ENCODE measurements at regions of chr6 and their contacts with region 1.

Region 1: DNA sequence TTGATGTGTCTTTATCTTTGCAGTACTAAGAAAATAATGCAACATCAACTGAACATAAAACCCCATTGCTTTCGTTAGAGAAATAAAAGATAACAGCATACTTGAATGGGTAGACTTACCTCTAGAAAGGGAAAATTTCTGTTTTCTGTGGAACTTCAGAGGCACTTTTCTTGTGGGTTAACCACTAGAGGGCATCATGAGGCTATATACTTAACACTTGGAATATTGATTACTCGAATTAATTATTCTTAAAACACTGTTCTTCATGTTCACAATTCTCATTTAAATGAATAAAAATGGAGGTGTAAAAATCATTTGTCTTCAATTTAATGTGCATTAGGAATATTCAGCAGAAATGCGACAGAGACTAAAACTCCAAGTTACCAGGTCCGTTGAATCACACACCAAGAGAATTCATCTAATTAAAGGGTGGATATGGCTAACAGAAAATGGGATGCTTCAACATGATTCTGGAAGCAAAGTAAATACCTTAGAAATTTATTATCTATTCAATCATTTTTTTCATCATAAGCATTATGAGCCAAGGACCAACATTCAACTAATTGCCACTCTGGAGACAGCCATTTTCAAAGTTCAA is 330.8 kb upstream of the PREP start:
- DNase-seq: no peak
- ATAC-seq: no peak
- H3K4me3 Mint-ChIP-seq: no peak overlapping the region
- H3K27ac Mint-ChIP-seq: no peak overlapping the region
- H3K4me1 Mint-ChIP-seq: peaks cover 2% of the 10 kb centered on the region
- H3K27me3 Mint-ChIP-seq: peaks cover 2% of the 10 kb centered on the region
- CTCF ChIP-seq: peak; percentile 81

Region 2: DNA sequence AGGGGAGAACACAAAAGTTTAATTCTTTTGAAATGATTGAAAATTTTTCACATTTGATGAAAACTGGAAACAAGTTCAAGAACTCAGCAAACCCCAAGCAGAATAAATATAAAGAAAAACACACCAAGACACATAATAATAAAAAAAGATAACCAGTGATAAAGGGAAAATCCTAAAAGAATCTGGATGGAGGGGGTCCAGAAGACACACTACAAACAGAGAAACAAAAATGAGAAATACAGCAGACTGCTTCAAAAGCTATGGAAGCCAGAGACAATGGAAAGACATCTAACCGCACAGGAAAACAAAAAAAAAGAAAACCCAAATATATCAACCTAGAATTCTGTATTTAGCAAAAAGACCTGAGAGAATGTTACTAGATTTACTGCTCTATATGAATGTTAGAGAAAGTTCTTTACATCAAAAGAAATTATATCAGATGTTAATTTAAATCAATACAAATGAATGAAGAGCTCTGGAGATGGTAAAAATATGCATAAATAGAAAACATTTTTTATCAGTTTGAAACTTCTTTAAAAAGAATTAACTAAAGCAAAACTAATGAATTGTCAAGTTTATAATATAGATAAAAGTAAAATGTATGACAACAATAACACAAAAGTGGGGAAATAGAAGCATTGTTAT is 20.1 kb before region 1 on chr6:
- CTCF ChIA-PET with region 1: no interaction called
- POLR2A ChIA-PET with region 1: no interaction called
- intact Hi-C with region 1: no loop called
- DNase-seq: no peak
- ATAC-seq: no peak
- H3K4me3 Mint-ChIP-seq: no peak overlapping the region
- H3K27ac Mint-ChIP-seq: no peak overlapping the region
- H3K4me1 Mint-ChIP-seq: no peaks in the 10 kb centered on the region
- H3K27me3 Mint-ChIP-seq: peaks cover 3% of the 10 kb centered on the region
- CTCF ChIP-seq: no peak

Region 3: DNA sequence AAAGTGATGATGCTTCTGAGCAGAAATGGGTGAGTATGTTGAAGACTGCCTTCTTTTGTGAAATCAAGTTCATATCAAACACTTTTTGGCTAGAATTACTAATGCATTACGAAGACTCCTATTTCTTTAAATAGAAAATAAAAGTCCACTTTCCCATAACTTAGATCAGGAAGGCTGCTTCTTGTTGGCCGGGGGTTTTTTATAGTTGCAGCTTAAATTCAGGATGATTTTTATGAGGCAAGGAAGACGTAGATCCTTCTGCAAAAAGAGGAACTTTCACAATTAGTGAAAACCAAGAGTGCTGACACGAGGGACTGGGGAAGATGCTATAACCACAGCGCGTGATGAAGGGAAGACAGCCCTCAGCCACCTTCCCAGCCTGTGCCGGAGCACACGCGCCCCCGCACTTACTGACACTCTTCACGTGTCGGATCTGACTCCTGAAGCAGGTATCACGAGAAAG is 146.4 kb after region 1 on chr6:
- CTCF ChIA-PET with region 1: no interaction called
- POLR2A ChIA-PET with region 1: no interaction called
- intact Hi-C with region 1: loop called (anchors 10 kb)
- DNase-seq: peak; percentile 51
- ATAC-seq: peak; percentile 71
- H3K4me3 Mint-ChIP-seq: peak overlapping the region; percentile 26
- H3K27ac Mint-ChIP-seq: no peak overlapping the region
- H3K4me1 Mint-ChIP-seq: peaks cover 9% of the 10 kb centered on the region
- H3K27me3 Mint-ChIP-seq: peaks cover 45% of the 10 kb centered on the region
- CTCF ChIP-seq: no peak

Measured in activated CD8-positive, alpha-beta T cell treated with anti-CD3 and anti-CD28 coated beads for 36 hours (primary cell).